H1 (cell line): ENCODE measurements at regions of chr3 and their contacts with region 1.

Region 1: DNA sequence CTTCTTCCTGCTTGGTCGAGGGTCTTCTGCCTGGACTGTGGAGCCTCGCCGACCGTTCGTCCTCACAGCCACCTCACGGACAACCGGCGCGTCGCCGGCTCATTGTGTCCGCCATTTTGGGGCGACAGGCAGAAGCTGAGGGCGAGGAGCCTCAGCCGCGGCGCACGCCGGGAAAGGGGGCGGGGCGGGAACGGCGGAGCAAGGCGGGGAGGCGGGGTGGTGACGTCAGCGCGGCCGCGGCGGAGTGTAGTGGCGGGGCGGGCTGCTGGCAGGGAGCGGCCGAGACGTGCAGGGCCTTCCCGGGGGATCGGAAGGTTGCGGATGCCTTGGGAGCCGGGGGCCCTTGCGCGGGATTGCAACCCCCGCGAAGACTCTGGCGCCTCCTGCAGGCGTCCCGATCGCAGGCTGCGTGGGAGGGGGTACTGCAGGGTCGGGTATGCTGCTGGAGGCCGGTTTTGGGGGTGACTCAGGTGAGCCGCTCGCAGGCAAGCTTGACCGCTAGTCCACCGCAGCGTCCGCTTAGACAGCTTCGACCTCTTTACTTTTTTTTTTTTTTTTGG is at the start of gene WDR82:
- DNase-seq: peak; percentile 85 to 99
- H3K4me3 ChIP-seq: peak within 1 kb of the TSS; percentile 94 to 99 (median 97)
- H3K27ac ChIP-seq: peak within 1 kb of the TSS; percentile 98
- H3K4me1 ChIP-seq: peaks cover 0 to 3% (median under 1%) of the 10 kb centered on the region in 4 experiments; a peak in 3 of 7 replicates
- H3K27me3 ChIP-seq: no peaks in the 10 kb centered on the region
- CTCF ChIP-seq: peak; percentile 58 to 74 (median 68)
- EP300 ChIP-seq: no peak
- POLR2A ChIP-seq: peak; percentile 96 to 97
- RAD21 ChIP-seq: peak; percentile 23 to 45; a peak in 3 of 4 replicates
- total RNA-seq, gene WDR82: 77.2 and 82.7 TPM in 2 replicates

Region 2: DNA sequence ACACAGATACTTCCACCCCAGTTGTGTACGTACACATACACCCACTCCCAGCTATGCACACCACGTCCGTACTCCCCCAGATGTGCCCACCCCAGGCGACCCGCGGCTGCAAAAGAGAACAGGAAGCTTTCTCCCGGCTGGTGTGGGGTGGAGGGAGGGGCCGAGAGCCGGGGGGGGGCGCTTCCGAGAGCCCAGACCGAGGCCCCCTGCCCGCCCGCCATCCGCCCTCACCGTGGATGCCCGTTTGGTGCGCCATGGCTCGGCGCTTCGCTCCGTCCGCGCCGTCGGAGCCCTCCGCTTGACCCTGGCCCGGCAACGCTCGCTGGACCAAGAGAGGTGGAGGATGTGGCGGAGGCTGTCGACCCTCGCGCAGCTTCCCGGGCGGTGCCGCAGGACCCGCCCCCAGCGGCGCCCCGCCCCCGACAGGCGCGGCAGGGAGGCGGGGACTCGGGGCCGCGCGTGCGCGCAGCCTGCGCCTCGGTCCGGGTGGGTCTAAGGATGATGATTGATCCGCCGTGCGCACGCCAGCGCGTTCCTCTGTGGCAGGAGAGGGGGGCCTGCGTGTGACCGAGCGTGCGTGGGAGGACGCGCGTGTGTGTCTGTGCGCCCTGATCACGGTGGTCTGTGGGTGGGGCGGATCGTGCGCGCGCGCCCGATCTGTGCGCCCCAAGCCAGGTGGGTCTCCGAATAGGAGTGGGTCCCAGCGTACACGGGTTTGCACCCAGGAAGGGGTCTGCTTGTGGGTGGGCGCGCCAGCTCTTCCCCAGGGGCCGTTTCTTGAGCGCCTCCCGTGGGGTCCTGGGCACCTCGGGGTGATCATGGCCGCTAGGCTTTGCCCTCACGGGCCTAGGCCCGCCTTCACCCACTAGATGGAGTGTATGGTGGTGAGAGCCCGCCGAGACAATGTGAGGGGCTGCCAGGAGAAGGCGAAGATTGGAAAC is 39.6 kb before region 1 on chr3 and contains the start of gene TWF2:
- CTCF ChIA-PET with region 1: interaction called, 12 read pairs
- POLR2A ChIA-PET with region 1: interaction called, 69 read pairs
- DNase-seq: peak in 1 of 2 experiments; percentile 87
- H3K4me3 ChIP-seq: peak within 1 kb of the TSS; percentile 72 to 95 (median 91)
- H3K27ac ChIP-seq: peak within 1 kb of the TSS; percentile 61; the same call in 1 of the 2 replicates
- H3K4me1 ChIP-seq: peaks cover 15 to 42% (median 28%) of the 10 kb centered on the region in 4 experiments
- H3K27me3 ChIP-seq: peaks cover 0 to 6% (median 3%) of the 10 kb centered on the region in 4 experiments; a peak in 3 of 7 replicates
- CTCF ChIP-seq: peak in 2 of 3 experiments; percentile 38 to 40; a peak in 2 of 4 replicates
- EP300 ChIP-seq: no peak
- POLR2A ChIP-seq: peak in 1 of 2 experiments; percentile 75; a peak in 2 of 3 replicates
- RAD21 ChIP-seq: peak in 1 of 2 experiments; percentile 14; a peak in 1 of 4 replicates
- total RNA-seq, gene TWF2: 62.6 and 65.2 TPM in 2 replicates

Region 3: DNA sequence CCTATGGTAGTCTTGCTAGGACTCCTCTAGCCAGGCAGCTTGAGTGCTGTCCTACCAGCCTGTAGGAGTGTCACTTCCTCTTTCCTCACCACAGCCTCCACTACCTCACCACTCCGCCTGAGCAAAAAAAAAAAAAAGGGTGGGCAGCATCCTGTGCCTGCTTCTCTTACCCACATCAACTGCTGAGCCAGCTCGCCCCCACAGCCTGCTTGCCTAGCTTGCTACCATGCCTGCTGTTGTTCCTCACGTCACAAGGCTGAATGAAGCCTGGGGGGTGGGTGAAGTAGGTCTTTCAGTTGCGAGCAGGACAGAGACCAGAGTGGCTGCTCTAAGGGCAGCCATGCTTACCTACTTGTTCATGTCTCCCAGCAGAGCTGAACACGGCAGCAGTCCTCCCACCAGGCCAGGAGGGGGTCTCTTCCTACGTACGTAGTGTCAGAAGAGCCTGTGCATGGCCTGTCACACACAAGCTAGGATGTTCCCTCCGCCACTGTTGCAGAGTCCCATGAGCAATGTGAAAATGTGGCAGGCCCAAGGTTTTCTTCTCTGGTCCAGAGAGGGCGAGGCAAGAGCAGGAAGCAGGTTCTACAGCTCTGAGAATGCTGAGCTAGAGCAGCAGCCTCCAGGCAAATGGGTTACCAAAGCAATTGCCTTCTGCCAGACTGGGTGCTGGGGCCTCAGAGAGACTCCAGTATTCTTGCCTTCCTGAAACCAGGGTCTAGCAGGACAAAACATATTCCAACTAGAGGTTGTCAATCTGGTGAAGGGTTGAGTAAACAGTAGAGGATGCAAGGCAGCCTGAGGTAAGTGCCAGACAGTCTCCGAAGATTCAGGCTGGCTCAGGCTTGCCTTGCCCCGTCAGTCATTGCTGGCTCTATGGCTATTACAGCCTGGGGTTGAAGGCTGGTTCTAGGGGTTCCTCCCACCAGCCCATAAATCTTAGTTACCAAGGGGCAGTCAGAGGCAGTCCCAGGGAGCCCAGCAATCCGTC is 25.0 kb before region 1 on chr3:
- CTCF ChIA-PET with region 1: interaction called, 7 read pairs
- POLR2A ChIA-PET with region 1: interaction called, 15 read pairs
- DNase-seq: no peak
- H3K4me3 ChIP-seq: no peak overlapping the region
- H3K27ac ChIP-seq: no peak overlapping the region
- H3K4me1 ChIP-seq: no peaks in the 10 kb centered on the region
- H3K27me3 ChIP-seq: no peaks in the 10 kb centered on the region
- CTCF ChIP-seq: no peak
- EP300 ChIP-seq: no peak
- POLR2A ChIP-seq: no peak
- RAD21 ChIP-seq: no peak

Region 4: DNA sequence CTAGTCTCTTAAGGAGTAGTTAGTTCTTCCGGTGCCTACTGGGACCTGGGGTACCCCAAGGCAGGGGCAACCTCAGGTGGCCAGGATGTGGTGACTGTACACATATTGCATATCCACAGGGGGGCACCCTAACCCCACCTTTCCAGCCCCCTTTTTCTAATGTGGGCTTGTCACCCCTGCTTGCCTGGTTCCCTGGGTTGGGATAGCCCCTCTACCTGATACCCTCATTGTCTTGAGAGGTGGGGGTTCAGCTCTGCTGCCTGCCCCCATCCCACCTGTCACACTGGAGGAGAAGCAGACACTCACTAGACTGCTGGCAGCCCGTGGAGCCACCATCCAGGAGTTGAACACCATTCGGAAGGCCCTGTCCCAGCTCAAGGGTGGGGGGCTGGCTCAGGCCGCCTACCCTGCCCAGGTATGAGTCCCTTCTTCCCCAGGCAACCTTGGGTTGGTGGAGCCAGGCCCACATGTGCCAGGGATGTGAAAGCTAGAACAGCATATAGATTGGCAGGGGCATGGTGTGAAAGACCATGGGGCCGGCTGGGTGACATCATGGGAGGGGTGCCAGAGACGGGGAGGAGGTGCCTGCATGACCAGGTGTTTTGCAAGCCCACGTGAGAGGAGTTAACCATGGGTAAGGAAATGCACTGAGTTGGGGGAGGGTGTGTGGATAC is 13.1 kb after region 1 on chr3:
- CTCF ChIA-PET with region 1: interaction called, 14 read pairs
- POLR2A ChIA-PET with region 1: interaction called, 76 read pairs
- DNase-seq: peak in 1 of 2 experiments; percentile 80
- H3K4me3 ChIP-seq: no peak overlapping the region
- H3K27ac ChIP-seq: no peak overlapping the region
- H3K4me1 ChIP-seq: peaks cover 0 to under 1% (median 0%) of the 10 kb centered on the region in 4 experiments; a peak in 3 of 7 replicates
- H3K27me3 ChIP-seq: no peaks in the 10 kb centered on the region
- CTCF ChIP-seq: peak in 2 of 3 experiments; percentile 64 to 82; a peak in 3 of 4 replicates
- EP300 ChIP-seq: no peak
- POLR2A ChIP-seq: no peak
- RAD21 ChIP-seq: peak; percentile 89 to 92